Calu3 (cell line): ENCODE measurements at regions of chr3 and their contacts with region 1.

Region 1: DNA sequence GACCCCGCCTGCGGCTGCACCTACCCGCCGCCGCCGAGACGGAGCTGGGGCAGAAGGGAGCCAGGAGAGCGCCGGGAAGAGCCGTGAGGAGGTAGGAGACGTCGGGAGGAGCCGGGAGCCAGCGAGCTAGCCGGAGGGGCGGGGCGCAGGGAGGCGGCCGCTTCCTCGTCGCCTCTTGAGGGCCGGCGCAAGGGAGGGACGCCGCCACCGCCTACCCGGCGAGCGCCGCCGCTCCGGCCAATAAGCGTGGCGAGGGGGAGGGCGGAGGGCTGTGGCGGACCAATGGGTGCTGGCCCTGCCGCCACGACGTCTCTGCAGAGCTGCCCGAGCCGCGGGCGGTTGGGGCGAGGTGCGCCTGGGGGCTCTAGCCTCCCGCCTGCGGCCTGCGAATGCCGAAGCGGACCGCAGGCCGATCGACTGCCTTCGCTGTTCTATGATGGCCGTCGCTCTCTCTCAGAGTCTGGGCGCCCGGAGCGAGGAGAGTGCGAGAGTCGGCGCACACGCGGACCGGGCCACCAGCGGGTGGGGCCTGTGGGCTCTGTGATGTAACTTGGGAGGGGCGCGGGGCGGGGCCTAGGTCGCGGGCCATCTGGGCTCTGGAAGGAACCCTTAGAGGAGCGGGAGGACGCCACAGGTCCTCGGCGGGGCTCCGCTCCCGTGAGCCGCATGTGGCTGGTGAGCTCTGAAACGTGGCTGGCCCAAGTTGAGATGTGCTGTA is 72.7 kb upstream of the MAP4 start:
- DNase-seq: peak; percentile 98
- H3K4me3 Mint-ChIP-seq: peak overlapping the region; percentile 99
- H3K27ac Mint-ChIP-seq: peak overlapping the region; percentile 96
- H3K4me1 Mint-ChIP-seq: peaks cover 18% of the 10 kb centered on the region
- H3K27me3 Mint-ChIP-seq: no peaks in the 10 kb centered on the region
- CTCF ChIP-seq: no peak

Region 2: GRCh38 chr3:48013288-48013980 is 75.5 kb before region 1 on chr3:
- CTCF ChIA-PET with region 1: interaction called, 6 read pairs
- intact Hi-C with region 1: loop called (anchors 10 kb)
- DNase-seq: peak; percentile 24
- H3K4me3 Mint-ChIP-seq: no peak overlapping the region
- H3K27ac Mint-ChIP-seq: no peak overlapping the region
- H3K4me1 Mint-ChIP-seq: peaks cover 51% of the 10 kb centered on the region
- H3K27me3 Mint-ChIP-seq: no peaks in the 10 kb centered on the region
- CTCF ChIP-seq: no peak

Region 3: GRCh38 chr3:48039487-48040190 is 49.3 kb before region 1 on chr3:
- CTCF ChIA-PET with region 1: interaction called, 3 read pairs
- intact Hi-C with region 1: loop called (anchors 5 kb)
- DNase-seq: no peak
- H3K4me3 Mint-ChIP-seq: peak overlapping the region; percentile 24
- H3K27ac Mint-ChIP-seq: peak overlapping the region; percentile 54
- H3K4me1 Mint-ChIP-seq: peaks cover 23% of the 10 kb centered on the region
- H3K27me3 Mint-ChIP-seq: no peaks in the 10 kb centered on the region
- CTCF ChIP-seq: no peak

Region 4: GRCh38 chr3:48222616-48223513 is 134.0 kb after region 1 on chr3 and contains the start of gene CAMP:
- CTCF ChIA-PET with region 1: no interaction called
- intact Hi-C with region 1: no loop called
- DNase-seq: peak; percentile 92
- H3K4me3 Mint-ChIP-seq: no peak within 1 kb of the TSS
- H3K27ac Mint-ChIP-seq: no peak within 1 kb of the TSS
- H3K4me1 Mint-ChIP-seq: peaks cover 16% of the 10 kb centered on the region
- H3K27me3 Mint-ChIP-seq: no peaks in the 10 kb centered on the region
- CTCF ChIP-seq: no peak
- total RNA-seq, gene CAMP: not detected in 2 replicates